CD8-positive, alpha-beta T cell (primary cell): ENCODE measurements at regions of chr19 and their contacts with region 1.

Region 1: GRCh38 chr19:52048555-52049501 is at the start of gene ZNF432:
- DNase-seq: peak; percentile 62 to 91 (median 84)
- ATAC-seq: peak; percentile 83
- H3K4me3 ChIP-seq: peak within 1 kb of the TSS; percentile 92 to 94
- H3K4me3 Mint-ChIP-seq: peak within 1 kb of the TSS; percentile 99
- H3K27ac ChIP-seq: peak within 1 kb of the TSS; percentile 95 to 97
- H3K27ac Mint-ChIP-seq: peak within 1 kb of the TSS; percentile 100
- H3K4me1 ChIP-seq: peaks cover 7% of the 10 kb centered on the region
- H3K4me1 Mint-ChIP-seq: peaks cover 29% of the 10 kb centered on the region
- H3K27me3 ChIP-seq: no peaks in the 10 kb centered on the region
- H3K27me3 Mint-ChIP-seq: no peaks in the 10 kb centered on the region
- CTCF ChIP-seq: no peak
- total RNA-seq, gene ZNF432: 16.0 to 18.4 TPM

Region 2: DNA sequence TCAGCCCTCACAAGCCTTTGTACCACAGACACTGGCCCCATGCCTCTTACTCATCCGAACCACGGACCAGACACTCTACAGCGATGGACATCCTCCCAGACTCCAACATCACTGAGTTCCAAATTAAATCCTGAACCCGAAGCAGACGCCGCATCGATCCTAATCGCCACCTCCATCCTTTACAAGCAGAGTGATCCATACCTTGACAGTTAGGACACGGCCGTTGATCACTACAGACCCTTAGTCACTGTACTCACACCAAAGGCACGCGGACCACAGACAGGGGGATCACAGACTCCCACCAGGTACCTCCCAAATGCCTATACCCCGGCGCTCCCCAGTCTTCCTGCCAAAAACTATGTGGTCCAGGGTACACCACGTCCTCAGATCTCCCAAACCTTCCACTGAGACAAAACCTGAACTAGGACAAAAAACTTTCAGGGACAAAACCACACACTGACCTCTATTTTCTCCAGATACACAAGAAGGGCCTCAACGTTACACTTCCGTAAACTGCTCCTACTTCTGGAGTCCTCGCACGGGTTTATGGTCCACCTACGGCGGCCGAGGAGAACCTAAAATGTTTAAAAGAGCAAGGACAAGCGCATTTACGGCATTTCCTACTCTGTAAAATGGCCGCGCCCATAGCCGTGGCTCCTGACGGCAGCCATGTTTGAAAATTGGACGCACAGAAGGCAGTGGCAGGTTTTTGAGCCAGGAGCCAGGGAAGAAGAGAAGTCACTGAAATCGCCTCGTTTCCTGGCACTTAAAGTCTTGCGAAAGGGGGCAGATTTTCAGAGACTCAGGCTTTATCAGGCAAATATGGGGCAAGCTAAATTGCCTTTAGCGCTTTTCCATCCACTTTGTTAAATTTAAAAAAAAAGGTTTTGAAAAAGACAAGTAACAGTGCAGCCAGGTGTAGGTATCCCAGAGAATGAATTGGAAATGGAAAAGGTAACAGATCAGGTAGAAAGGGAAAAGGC is 62.2 kb before region 1 on chr19 and contains the start of gene ZNF350:
- CTCF ChIA-PET with region 1: no interaction called
- POLR2A ChIA-PET with region 1: interaction called, 3 read pairs
- intact Hi-C with region 1: loop called (anchors 1 kb)
- DNase-seq: peak; percentile 74 to 96 (median 88)
- ATAC-seq: peak; percentile 99
- H3K4me3 ChIP-seq: peak within 1 kb of the TSS; percentile 85 to 92
- H3K4me3 Mint-ChIP-seq: peak within 1 kb of the TSS; percentile 96
- H3K27ac ChIP-seq: peak within 1 kb of the TSS; percentile 71 to 77
- H3K27ac Mint-ChIP-seq: peak within 1 kb of the TSS; percentile 95
- H3K4me1 ChIP-seq: peaks cover 5% of the 10 kb centered on the region
- H3K4me1 Mint-ChIP-seq: peaks cover 21% of the 10 kb centered on the region
- H3K27me3 ChIP-seq: no peaks in the 10 kb centered on the region
- H3K27me3 Mint-ChIP-seq: no peaks in the 10 kb centered on the region
- CTCF ChIP-seq: no peak
- total RNA-seq, gene ZNF350: 48.1 to 50.8 TPM

Region 3: GRCh38 chr19:52028027-52028779 is 20.6 kb before region 1 on chr19 and contains the start of gene ZNF614:
- CTCF ChIA-PET with region 1: interaction called, 3 read pairs
- POLR2A ChIA-PET with region 1: interaction called, 14 read pairs
- intact Hi-C with region 1: loop called (anchors 1 kb)
- DNase-seq: peak; percentile 74 to 92 (median 85)
- ATAC-seq: peak; percentile 86
- H3K4me3 ChIP-seq: peak within 1 kb of the TSS; percentile 92 to 93
- H3K4me3 Mint-ChIP-seq: peak within 1 kb of the TSS; percentile 98
- H3K27ac ChIP-seq: peak within 1 kb of the TSS; percentile 93 to 94
- H3K27ac Mint-ChIP-seq: peak within 1 kb of the TSS; percentile 99
- H3K4me1 ChIP-seq: peaks cover 10% of the 10 kb centered on the region
- H3K4me1 Mint-ChIP-seq: peaks cover 30% of the 10 kb centered on the region
- H3K27me3 ChIP-seq: no peaks in the 10 kb centered on the region
- H3K27me3 Mint-ChIP-seq: no peaks in the 10 kb centered on the region
- CTCF ChIP-seq: no peak
- total RNA-seq, gene ZNF614: 10.6 to 11.4 TPM

Region 4: DNA sequence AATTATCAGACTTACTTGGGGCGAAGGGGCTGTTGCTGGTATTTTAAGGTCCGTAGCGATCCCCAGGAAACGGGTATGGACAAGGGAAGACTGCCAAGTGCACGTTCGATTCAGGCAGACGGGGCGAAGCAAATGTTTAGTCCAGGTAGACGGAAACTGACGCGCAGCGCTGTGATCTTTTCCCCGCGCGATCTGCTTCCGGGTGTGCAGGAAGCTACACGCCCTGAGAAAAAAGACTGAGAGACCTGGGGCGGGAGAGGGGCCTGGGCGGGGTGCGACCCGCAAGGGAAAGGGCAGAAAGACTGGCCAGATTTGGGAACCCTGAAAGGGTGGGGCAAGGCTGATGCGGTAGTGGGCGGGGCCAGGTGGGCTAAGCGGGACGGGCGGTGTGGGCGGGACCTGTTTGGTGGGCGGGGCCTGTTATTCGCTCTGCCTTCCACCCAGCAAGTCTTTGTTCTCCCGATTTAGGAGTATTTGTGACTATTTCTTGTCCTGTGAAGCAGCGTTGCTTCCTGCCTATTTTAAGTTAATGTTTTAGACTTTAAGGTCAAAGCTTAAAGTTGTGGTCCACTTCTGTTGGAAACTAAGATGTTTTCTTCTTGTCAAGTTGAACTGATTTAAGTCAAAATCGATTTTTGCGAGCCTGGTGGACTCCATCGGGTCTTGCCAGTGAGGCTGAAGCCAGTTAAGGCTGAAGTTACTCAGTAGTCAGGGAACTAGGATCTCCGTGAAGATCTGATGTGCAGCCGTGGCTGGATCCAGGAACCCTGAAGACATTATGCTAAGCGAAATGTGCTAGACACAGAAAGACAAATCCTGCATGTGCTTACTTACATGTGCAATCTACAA is 122.7 kb after region 1 on chr19 and contains the start of gene ZNF836:
- CTCF ChIA-PET with region 1: no interaction called
- POLR2A ChIA-PET with region 1: no interaction called
- intact Hi-C with region 1: loop called in 1 of 2 experiments (anchors 1 kb)
- DNase-seq: peak; percentile 79 to 95 (median 92)
- ATAC-seq: peak; percentile 92
- H3K4me3 ChIP-seq: peak within 1 kb of the TSS; percentile 83 to 96
- H3K4me3 Mint-ChIP-seq: peak within 1 kb of the TSS; percentile 94
- H3K27ac ChIP-seq: peak within 1 kb of the TSS; percentile 72 to 96
- H3K27ac Mint-ChIP-seq: peak within 1 kb of the TSS; percentile 95
- H3K4me1 ChIP-seq: peaks cover 24% of the 10 kb centered on the region
- H3K4me1 Mint-ChIP-seq: peaks cover 41% of the 10 kb centered on the region
- H3K27me3 ChIP-seq: no peaks in the 10 kb centered on the region
- H3K27me3 Mint-ChIP-seq: no peaks in the 10 kb centered on the region
- CTCF ChIP-seq: no peak
- total RNA-seq, gene ZNF836: 17.6 to 22.1 TPM